T-cell (primary cell): ENCODE measurements at regions of chr17 and their contacts with region 1.

Region 1: GRCh38 chr17:43360739-43361505 is 37.9 kb upstream of the ARL4D start:
- DNase-seq: peak; percentile 80 to 99 (median 93)
- ATAC-seq: peak; percentile 69 to 86 (median 83)
- H3K4me3 ChIP-seq: peak overlapping the region; percentile 58 to 61
- H3K4me3 Mint-ChIP-seq: peak overlapping the region; percentile 80 to 94 (median 92)
- H3K27ac ChIP-seq: peak overlapping the region; percentile 89
- H3K27ac Mint-ChIP-seq: peak overlapping the region; percentile 100
- H3K4me1 ChIP-seq: peaks cover 10 to 13% of the 10 kb centered on the region in 2 experiments
- H3K4me1 Mint-ChIP-seq: peaks cover 20 to 48% (median 43%) of the 10 kb centered on the region in 3 donors
- H3K27me3 ChIP-seq: no peaks in the 10 kb centered on the region
- H3K27me3 Mint-ChIP-seq: peaks cover 4 to 6% of the 10 kb centered on the region in 2 donors

Region 2: GRCh38 chr17:42997984-42998938 is 362.7 kb before region 1 on chr17 and contains the start of gene RPL27:
- CTCF ChIA-PET with region 1: interaction called in 1 of 2 experiments, 10 read pairs
- POLR2A ChIA-PET with region 1: interaction called in 1 of 2 experiments, 14 read pairs
- DNase-seq: peak; percentile 94 to 100 (median 98)
- ATAC-seq: peak; percentile 94 to 97 (median 95)
- H3K4me3 ChIP-seq: peak within 1 kb of the TSS; percentile 72 to 80
- H3K4me3 Mint-ChIP-seq: peak within 1 kb of the TSS; percentile 90 to 97 (median 92)
- H3K27ac ChIP-seq: peak within 1 kb of the TSS; percentile 94
- H3K27ac Mint-ChIP-seq: peak within 1 kb of the TSS; percentile 88 to 98
- H3K4me1 ChIP-seq: peaks cover 3 to 27% of the 10 kb centered on the region in 2 experiments
- H3K4me1 Mint-ChIP-seq: peaks cover 24 to 30% (median 26%) of the 10 kb centered on the region in 3 donors
- H3K27me3 ChIP-seq: no peaks in the 10 kb centered on the region
- H3K27me3 Mint-ChIP-seq: no peaks in the 10 kb centered on the region
- total RNA-seq, gene RPL27: 1,254 to 1,790 (median 1,710) TPM

Region 3: DNA sequence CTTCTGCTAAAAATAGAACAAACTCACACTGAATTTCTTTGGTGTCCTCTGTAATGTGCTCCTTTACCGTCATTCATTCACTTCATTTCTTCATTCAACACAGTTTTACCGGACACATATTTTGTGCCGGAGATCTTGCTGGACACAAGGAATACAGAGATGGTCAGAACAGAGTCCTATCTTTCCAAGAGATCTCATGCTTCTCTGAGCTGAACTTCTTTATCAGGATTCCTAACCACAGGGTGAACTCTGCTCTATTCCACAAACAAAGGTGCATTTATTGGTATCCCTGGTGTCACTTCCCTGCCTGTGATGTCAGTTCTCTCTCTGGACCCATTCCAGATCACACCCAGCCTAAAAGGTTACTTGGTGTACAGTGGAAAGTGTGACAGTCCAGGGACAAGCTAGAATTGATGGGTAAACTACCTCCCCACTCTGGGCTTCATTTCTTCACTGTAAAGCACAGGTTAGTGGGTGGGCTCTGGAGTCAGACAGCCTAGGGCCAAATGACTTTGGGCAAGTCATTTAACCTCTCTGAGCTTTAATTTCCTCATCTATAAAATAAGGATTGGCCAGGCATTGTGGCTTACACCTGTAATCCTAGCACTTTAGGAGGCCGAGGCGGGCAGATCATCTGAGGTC is 350.1 kb before region 1 on chr17:
- CTCF ChIA-PET with region 1: no interaction called
- POLR2A ChIA-PET with region 1: no interaction called
- DNase-seq: no peak
- ATAC-seq: no peak
- H3K4me3 ChIP-seq: no peak overlapping the region
- H3K4me3 Mint-ChIP-seq: no peak overlapping the region
- H3K27ac ChIP-seq: no peak overlapping the region
- H3K27ac Mint-ChIP-seq: peak overlapping the region in 1 of 2 donors; percentile 22
- H3K4me1 ChIP-seq: peaks cover 2 to 31% of the 10 kb centered on the region in 2 experiments
- H3K4me1 Mint-ChIP-seq: peaks cover 18 to 29% (median 27%) of the 10 kb centered on the region in 3 donors
- H3K27me3 ChIP-seq: no peaks in the 10 kb centered on the region
- H3K27me3 Mint-ChIP-seq: no peaks in the 10 kb centered on the region

Region 4: GRCh38 chr17:43085474-43085873 is 275.4 kb before region 1 on chr17:
- CTCF ChIA-PET with region 1: no interaction called
- POLR2A ChIA-PET with region 1: no interaction called
- DNase-seq: no peak
- ATAC-seq: no peak
- H3K4me3 ChIP-seq: no peak overlapping the region
- H3K4me3 Mint-ChIP-seq: no peak overlapping the region
- H3K27ac ChIP-seq: no peak overlapping the region
- H3K27ac Mint-ChIP-seq: no peak overlapping the region
- H3K4me1 ChIP-seq: no peaks in the 10 kb centered on the region
- H3K4me1 Mint-ChIP-seq: no peaks in the 10 kb centered on the region
- H3K27me3 ChIP-seq: no peaks in the 10 kb centered on the region
- H3K27me3 Mint-ChIP-seq: no peaks in the 10 kb centered on the region

Region 5: GRCh38 chr17:43170766-43171585 is 189.9 kb before region 1 on chr17 and contains the start of gene NBR1:
- CTCF ChIA-PET with region 1: no interaction called
- POLR2A ChIA-PET with region 1: interaction called in 1 of 2 experiments, 16 read pairs
- DNase-seq: peak; percentile 89 to 99 (median 96)
- ATAC-seq: peak; percentile 81 to 85 (median 83)
- H3K4me3 ChIP-seq: peak within 1 kb of the TSS; percentile 72 to 87
- H3K4me3 Mint-ChIP-seq: no peak within 1 kb of the TSS
- H3K27ac ChIP-seq: peak within 1 kb of the TSS; percentile 99
- H3K27ac Mint-ChIP-seq: no peak within 1 kb of the TSS
- H3K4me1 ChIP-seq: peaks cover 27 to 45% of the 10 kb centered on the region in 2 experiments
- H3K4me1 Mint-ChIP-seq: peaks cover 31 to 38% (median 35%) of the 10 kb centered on the region in 3 donors
- H3K27me3 ChIP-seq: no peaks in the 10 kb centered on the region
- H3K27me3 Mint-ChIP-seq: no peaks in the 10 kb centered on the region
- total RNA-seq, gene NBR1: 51.5 to 82.2 (median 80.1) TPM

Region 6: GRCh38 chr17:43211480-43212402 is 149.2 kb before region 1 on chr17 and contains the start of gene TMEM106A:
- CTCF ChIA-PET with region 1: no interaction called
- POLR2A ChIA-PET with region 1: interaction called in 1 of 2 experiments, 10 read pairs
- DNase-seq: peak; percentile 42 to 85 (median 65)
- ATAC-seq: peak; percentile 89 to 94 (median 92)
- H3K4me3 ChIP-seq: peak within 1 kb of the TSS; percentile 68 to 80
- H3K4me3 Mint-ChIP-seq: peak within 1 kb of the TSS; percentile 97 to 99 (median 98)
- H3K27ac ChIP-seq: peak within 1 kb of the TSS; percentile 84
- H3K27ac Mint-ChIP-seq: peak within 1 kb of the TSS; percentile 89 to 97
- H3K4me1 ChIP-seq: peaks cover 18 to 22% of the 10 kb centered on the region in 2 experiments
- H3K4me1 Mint-ChIP-seq: peaks cover 29 to 37% (median 34%) of the 10 kb centered on the region in 3 donors
- H3K27me3 ChIP-seq: no peaks in the 10 kb centered on the region
- H3K27me3 Mint-ChIP-seq: no peaks in the 10 kb centered on the region
- total RNA-seq, gene TMEM106A: 9.3 to 18.1 (median 10.4) TPM

Region 7: DNA sequence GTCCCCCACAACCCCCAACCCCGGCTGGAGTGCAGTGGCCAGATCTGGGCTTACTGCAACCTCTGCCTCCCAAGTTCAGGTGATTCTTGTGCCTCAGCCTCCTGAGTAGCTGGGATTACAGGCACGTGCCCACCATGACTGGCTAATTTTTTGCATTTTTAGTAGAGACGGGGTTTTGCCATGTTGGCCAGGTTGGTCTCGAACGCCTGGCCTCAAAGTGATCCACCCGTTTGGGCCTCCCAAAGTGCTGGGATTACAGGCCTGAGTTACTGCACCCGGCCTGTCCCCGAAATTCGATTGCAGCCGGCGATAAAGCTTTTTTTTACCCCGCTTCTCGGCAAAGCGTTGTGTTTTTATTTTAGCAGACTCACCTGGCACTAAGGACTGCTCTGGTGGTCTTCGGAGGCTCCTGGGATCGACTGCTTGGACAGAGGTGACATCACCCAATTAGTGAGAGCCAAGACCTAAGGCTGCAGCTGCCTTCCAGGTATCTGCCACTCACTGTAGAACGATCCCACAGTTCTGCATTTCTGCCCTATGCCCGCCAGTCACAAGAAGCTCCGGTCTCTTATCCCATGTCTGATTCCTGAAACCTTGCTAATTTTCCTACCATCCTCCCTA is 44.3 kb before region 1 on chr17:
- CTCF ChIA-PET with region 1: interaction called in 1 of 2 experiments, 4 read pairs
- POLR2A ChIA-PET with region 1: interaction called, 4 to 59 read pairs
- DNase-seq: peak in 4 of 35 experiments; percentile 6 to 34 (median 18)
- ATAC-seq: no peak
- H3K4me3 ChIP-seq: no peak overlapping the region
- H3K4me3 Mint-ChIP-seq: no peak overlapping the region
- H3K27ac ChIP-seq: no peak overlapping the region
- H3K27ac Mint-ChIP-seq: peak overlapping the region in 1 of 2 donors; percentile 64
- H3K4me1 ChIP-seq: peaks cover 0 to 2% of the 10 kb centered on the region in 2 experiments
- H3K4me1 Mint-ChIP-seq: peaks cover 6 to 14% (median 10%) of the 10 kb centered on the region in 3 donors
- H3K27me3 ChIP-seq: no peaks in the 10 kb centered on the region
- H3K27me3 Mint-ChIP-seq: no peaks in the 10 kb centered on the region

Region 8: DNA sequence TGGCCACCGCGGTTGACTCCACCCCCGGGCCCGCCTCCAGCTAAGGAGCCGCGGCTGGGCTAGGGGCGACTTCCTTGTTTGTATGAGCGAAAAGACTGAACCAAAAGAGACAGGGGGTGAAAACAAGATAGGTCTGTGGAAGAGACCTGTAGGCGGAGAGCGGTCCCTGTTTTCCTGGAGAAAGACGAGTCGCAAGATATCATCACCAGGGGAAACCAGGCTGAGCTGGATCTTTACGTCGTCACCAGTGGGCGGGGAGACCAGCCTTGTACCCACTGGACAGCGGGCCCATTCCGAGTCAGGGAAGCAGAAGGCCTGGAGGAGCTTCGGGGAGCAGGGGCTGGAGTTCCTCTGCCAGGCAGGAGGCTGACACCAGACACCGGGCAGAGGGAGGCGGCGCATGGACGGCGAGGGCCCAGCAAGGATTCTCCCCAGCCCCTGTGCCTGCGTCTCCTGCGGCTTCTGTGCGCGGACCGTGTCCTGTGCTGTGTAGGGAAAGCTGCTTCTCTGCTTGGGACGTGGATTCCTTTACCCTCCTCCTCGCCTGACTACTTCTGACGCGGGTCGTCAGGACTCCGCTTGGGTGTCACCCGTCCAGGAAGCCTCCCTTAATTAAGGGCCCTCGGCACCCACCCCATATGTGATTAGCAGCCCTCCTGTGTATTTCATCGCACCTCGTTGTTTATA is 27.6 kb after region 1 on chr17:
- CTCF ChIA-PET with region 1: interaction called in 1 of 2 experiments, 8 read pairs
- POLR2A ChIA-PET with region 1: interaction called, 5 to 35 read pairs
- DNase-seq: peak; percentile 85 to 94 (median 89)
- ATAC-seq: peak; percentile 73 to 80 (median 78)
- H3K4me3 ChIP-seq: peak overlapping the region; percentile 89 to 92
- H3K4me3 Mint-ChIP-seq: peak overlapping the region; percentile 90 to 94 (median 93)
- H3K27ac ChIP-seq: peak overlapping the region; percentile 99
- H3K27ac Mint-ChIP-seq: peak overlapping the region; percentile 96 to 97
- H3K4me1 ChIP-seq: peaks cover 6 to 26% of the 10 kb centered on the region in 2 experiments
- H3K4me1 Mint-ChIP-seq: peaks cover 20 to 35% (median 28%) of the 10 kb centered on the region in 3 donors
- H3K27me3 ChIP-seq: no peaks in the 10 kb centered on the region
- H3K27me3 Mint-ChIP-seq: no peaks in the 10 kb centered on the region